Kidney (tissue), 22 donors: ENCODE measurements at regions of chr16 and their contacts with region 1.

Region 1: DNA sequence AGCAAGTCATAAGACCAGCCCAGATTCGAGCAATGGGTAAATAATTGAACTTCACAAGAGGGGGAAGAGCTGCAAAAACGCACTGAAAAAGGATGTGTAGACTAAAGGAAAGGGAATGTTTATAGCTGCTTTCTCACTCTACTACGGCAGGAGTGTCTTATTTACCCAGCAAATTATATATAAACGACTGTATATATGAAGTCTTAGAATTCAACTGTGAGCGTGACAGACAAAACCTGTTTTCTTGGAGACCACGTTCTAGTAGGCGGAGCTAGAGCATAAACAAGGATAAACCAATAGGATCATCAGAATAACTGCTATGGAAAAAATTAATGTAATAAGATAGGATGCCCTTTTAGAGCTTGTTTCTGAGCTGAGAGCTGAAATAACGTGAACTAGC is 394.6 kb upstream of the MON1B start:
- DNase-seq: no peak
- H3K4me3 ChIP-seq: no peak overlapping the region
- H3K27ac ChIP-seq: no peak overlapping the region
- H3K4me1 ChIP-seq: no peaks in the 10 kb centered on the region
- H3K27me3 ChIP-seq: no peaks in the 10 kb centered on the region
- CTCF ChIP-seq: no peak

Region 2: GRCh38 chr16:76854234-76854633 is 57.8 kb after region 1 on chr16:
- intact Hi-C with region 1: loop called (anchors 10 kb)
- DNase-seq: no peak
- H3K4me3 ChIP-seq: no peak overlapping the region
- H3K27ac ChIP-seq: no peak overlapping the region
- H3K4me1 ChIP-seq: no peaks in the 10 kb centered on the region
- H3K27me3 ChIP-seq: no peaks in the 10 kb centered on the region
- CTCF ChIP-seq: no peak